ENCODE measurements at regions of chr15 and their contacts with region 1.

Region 1: DNA sequence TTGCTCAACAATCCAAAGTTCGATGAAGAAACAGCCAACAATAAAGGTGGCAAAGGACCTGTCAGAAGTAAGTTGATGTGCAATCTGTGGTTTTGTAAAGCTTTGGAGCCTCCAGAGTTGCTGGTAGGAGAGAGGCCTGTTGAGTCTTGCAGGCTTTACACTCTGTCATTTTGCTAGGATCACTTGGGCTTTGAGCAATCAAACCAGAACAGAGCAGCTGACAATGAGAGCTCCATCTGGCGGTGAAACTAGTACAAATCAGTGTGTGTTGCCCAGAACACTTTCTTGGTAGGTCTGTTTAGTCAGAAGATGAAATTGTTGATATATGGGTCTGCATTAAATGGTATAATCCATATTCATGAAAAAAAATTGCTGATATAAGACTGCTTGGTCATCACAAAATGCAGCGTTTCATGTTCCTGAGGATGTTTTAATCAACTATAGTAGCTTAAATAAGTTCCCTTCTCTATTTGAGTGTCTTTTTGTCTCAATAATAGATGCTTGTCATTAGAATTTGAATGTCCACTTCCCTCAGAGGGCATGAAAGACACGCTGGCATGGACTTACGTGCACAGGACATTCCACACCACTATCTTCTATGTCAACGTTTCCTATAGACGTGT is 25.7 kb downstream of the TMOD2 start:
- DNase-seq: peak; percentile 80
- H3K4me3 ChIP-seq: no peak overlapping the region
- H3K27ac ChIP-seq: no peak overlapping the region
- H3K4me1 ChIP-seq: no peaks in the 10 kb centered on the region
- H3K27me3 ChIP-seq: peaks cover 0 to 4% of the 10 kb centered on the region in 2 experiments
- CTCF ChIP-seq: peak; percentile 72 to 75
- POLR2A ChIP-seq: no peak

Region 2: DNA sequence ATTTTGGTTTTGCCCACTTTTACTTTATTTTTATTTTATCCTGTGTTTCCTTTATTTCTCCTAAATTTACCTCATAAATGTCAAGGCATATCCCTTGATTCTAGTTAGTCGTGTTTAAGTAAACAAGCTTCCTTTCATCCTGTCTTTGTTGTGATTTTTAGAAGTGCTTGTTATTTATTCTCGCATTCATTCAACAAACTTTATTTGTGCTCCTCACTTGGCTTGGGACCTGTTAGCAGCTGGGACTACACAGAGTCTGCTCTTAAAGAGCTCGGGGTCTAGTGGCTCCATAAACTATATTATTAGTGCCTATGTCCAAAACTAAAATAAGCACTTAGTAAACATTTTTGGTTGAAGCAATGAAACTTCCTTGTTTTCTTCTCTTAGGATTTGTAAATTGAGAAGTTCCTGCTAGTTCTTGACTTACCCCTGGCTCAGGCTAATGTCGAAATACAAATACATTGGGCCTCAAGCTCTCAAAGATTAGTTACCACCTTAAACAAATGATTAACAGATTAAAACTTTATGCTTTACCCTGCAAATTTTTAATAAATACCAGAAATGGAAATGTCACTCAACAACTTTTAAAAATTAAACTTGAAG is 135.4 kb before region 1 on chr15:
- CTCF ChIA-PET with region 1: interaction called, 942 read pairs
- POLR2A ChIA-PET with region 1: no interaction called
- dilution Hi-C with region 1: no loop called
- intact Hi-C with region 1: no loop called
- DNase-seq: no peak
- H3K4me3 ChIP-seq: no peak overlapping the region
- H3K27ac ChIP-seq: no peak overlapping the region
- H3K4me1 ChIP-seq: no peaks in the 10 kb centered on the region
- H3K27me3 ChIP-seq: peaks cover 0 to 3% of the 10 kb centered on the region in 2 experiments
- CTCF ChIP-seq: no peak
- POLR2A ChIP-seq: no peak

Region 3: GRCh38 chr15:51668446-51668845 is 108.6 kb before region 1 on chr15:
- CTCF ChIA-PET with region 1: interaction called, 20 read pairs
- POLR2A ChIA-PET with region 1: no interaction called
- dilution Hi-C with region 1: no loop called
- intact Hi-C with region 1: no loop called
- DNase-seq: no peak
- H3K4me3 ChIP-seq: no peak overlapping the region
- H3K27ac ChIP-seq: no peak overlapping the region
- H3K4me1 ChIP-seq: no peaks in the 10 kb centered on the region
- H3K27me3 ChIP-seq: peaks cover 14 to 30% of the 10 kb centered on the region in 2 experiments
- CTCF ChIP-seq: no peak
- POLR2A ChIP-seq: no peak

Region 4: GRCh38 chr15:51721199-51721960 is 55.7 kb before region 1 on chr15:
- CTCF ChIA-PET with region 1: interaction called, 8 read pairs
- POLR2A ChIA-PET with region 1: no interaction called
- dilution Hi-C with region 1: no loop called
- intact Hi-C with region 1: loop called (anchors 5 kb)
- DNase-seq: peak; percentile 86
- H3K4me3 ChIP-seq: peak overlapping the region in 1 of 3 experiments; percentile 2
- H3K27ac ChIP-seq: peak overlapping the region; percentile 60
- H3K4me1 ChIP-seq: peaks cover 15% of the 10 kb centered on the region
- H3K27me3 ChIP-seq: no peaks in the 10 kb centered on the region
- CTCF ChIP-seq: no peak
- POLR2A ChIP-seq: no peak

Region 5: GRCh38 chr15:51758645-51759044 is 18.4 kb before region 1 on chr15:
- CTCF ChIA-PET with region 1: interaction called, 42 read pairs
- POLR2A ChIA-PET with region 1: interaction called, 6 read pairs
- dilution Hi-C with region 1: no loop called
- intact Hi-C with region 1: no loop called
- DNase-seq: no peak
- H3K4me3 ChIP-seq: no peak overlapping the region
- H3K27ac ChIP-seq: no peak overlapping the region
- H3K4me1 ChIP-seq: no peaks in the 10 kb centered on the region
- H3K27me3 ChIP-seq: peaks cover 23 to 27% of the 10 kb centered on the region in 2 experiments
- CTCF ChIP-seq: no peak
- POLR2A ChIP-seq: no peak

Region 6: DNA sequence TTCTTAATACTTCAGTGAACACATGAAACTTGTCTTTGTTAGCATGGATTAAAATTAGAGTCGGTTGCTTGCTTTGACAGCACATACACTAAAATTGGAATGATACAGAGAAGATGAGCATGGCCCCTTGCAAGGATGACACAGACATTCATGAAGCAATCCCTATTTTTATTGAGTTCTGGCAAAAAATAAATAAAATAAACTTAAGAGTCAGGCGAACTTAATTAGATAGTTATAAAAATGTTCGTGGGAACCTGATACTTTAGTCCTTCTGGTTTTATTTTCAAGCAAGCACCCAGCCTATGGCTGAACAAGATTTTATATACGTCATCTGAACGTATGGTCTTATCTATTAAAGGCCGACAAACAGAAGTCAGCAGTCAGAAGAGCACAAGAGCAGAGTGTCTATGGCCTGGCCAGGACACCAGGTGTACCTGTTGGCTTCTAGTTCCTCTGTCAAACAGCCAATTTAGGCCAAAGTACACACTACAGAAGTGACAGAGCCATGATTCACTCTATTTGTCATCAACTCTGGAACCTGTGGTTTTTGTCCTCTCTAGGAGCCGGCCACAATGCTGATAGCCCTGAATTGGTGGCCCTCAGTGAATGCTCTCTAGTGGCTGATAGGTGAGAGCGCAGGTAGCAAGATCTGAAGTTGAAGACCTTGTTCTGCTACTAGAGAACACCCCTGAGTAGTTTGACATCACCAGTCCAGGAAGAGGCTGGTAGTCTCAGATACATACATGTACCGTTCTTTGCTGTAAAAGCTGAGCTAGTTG is 130.3 kb after region 1 on chr15:
- CTCF ChIA-PET with region 1: interaction called, 26 read pairs
- POLR2A ChIA-PET with region 1: interaction called, 3 read pairs
- dilution Hi-C with region 1: no loop called
- intact Hi-C with region 1: loop called (anchors 1 kb)
- DNase-seq: no peak
- H3K4me3 ChIP-seq: no peak overlapping the region
- H3K27ac ChIP-seq: no peak overlapping the region
- H3K4me1 ChIP-seq: no peaks in the 10 kb centered on the region
- H3K27me3 ChIP-seq: no peaks in the 10 kb centered on the region
- CTCF ChIP-seq: no peak
- POLR2A ChIP-seq: no peak

Region 7: DNA sequence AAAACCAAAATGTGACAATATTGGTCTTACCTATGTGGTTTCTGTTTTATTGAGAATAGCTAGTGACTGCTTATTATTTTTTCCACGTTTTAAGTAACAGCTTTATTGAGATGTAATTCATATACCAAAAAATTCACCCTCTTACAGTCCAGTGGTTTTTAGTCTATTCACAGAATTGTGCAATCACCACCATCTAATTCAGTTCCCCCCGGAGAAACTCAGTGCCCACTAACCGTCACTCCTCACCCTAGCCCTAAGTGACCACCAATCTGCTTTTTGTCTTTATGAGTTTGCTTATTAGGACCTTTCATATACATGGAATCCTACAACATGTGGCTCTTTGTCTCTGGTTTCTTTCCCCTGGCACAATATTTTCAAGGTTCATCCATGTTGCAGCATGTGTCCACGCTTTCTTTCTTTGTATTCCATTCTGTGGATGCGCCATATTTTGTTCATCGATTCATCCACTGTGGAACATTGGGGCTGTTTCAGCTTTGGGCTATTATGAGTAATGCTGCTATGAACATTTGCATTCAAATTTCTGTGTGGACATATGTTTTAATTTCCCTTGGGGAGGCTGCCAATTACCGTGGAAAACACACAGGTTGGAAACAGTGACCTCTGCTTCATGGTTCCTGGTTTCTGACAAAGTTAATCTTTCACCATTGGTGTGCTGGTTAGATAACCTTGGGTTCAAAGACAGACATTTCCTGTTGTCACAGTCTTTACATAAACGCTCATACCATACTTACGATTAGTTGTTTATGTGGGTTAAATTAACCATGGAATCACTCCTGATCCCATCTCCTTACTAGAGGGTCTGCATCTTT is 338.8 kb after region 1 on chr15:
- CTCF ChIA-PET with region 1: no interaction called
- POLR2A ChIA-PET with region 1: no interaction called
- dilution Hi-C with region 1: no loop called
- intact Hi-C with region 1: no loop called
- DNase-seq: peak; percentile 96
- H3K4me3 ChIP-seq: no peak overlapping the region
- H3K27ac ChIP-seq: peak overlapping the region; percentile 3
- H3K4me1 ChIP-seq: peaks cover 21% of the 10 kb centered on the region
- H3K27me3 ChIP-seq: no peaks in the 10 kb centered on the region
- CTCF ChIP-seq: no peak
- POLR2A ChIP-seq: no peak